ENCODE measurements at regions of chrX and their contacts with region 1.

Region 1: DNA sequence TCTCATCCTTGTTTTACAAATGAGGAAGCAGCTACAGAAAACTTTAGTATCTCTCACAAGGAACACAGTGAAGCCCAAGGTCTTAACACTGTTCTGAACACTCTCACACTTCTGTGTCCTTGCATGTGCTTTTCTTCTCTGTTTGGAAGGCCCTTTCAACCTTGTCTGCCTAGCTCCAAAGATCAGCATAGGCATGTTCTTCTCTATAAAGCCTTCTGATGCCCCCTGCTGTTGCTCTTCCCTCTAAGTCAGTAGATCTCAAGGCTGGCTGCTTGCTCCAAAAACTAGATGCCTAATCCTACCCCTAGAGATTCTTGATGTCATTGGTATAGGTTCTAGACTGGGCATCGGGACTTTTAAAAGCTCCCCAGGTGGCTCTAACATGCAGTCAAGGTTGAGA is 5.9 kb downstream of the APOO start:
- DNase-seq: peak; percentile 48
- ATAC-seq: peak; percentile 82
- H3K4me3 Mint-ChIP-seq: no peak overlapping the region
- H3K27ac Mint-ChIP-seq: no peak overlapping the region
- H3K4me1 Mint-ChIP-seq: peaks cover 7% of the 10 kb centered on the region
- H3K27me3 Mint-ChIP-seq: no peaks in the 10 kb centered on the region

Region 2: GRCh38 chrX:23637187-23637586 is 264.6 kb before region 1 on chrX:
- CTCF ChIA-PET with region 1: interaction called, 11 read pairs
- POLR2A ChIA-PET with region 1: no interaction called
- intact Hi-C with region 1: loop called (anchors 1 kb)
- DNase-seq: peak; percentile 80
- ATAC-seq: peak; percentile 98
- H3K4me3 Mint-ChIP-seq: no peak overlapping the region
- H3K27ac Mint-ChIP-seq: no peak overlapping the region
- H3K4me1 Mint-ChIP-seq: no peaks in the 10 kb centered on the region
- H3K27me3 Mint-ChIP-seq: peaks cover 2% of the 10 kb centered on the region

Region 3: DNA sequence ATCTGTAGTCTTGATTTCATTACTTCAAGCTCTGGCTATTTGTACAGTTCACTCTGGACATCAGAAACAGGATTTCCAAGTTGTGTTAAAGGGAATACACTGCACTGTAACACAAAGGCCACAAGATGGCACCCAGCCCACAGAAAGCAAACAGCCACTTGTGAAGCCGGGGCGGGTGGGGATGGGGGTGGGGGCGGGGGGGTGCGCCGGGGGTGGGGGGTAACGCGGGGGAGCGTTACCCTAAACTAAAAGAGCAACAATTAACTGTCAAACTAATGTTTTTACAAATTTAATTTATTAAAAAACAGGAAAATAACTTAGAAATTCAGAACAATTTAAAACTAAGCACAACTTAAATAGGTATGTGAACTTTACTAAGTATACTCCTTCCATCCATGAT is 207.2 kb before region 1 on chrX:
- CTCF ChIA-PET with region 1: interaction called, 24 read pairs
- POLR2A ChIA-PET with region 1: interaction called, 3 read pairs
- intact Hi-C with region 1: loop called (anchors 1 kb)
- DNase-seq: peak; percentile 60
- ATAC-seq: peak; percentile 55
- H3K4me3 Mint-ChIP-seq: no peak overlapping the region
- H3K27ac Mint-ChIP-seq: no peak overlapping the region
- H3K4me1 Mint-ChIP-seq: no peaks in the 10 kb centered on the region
- H3K27me3 Mint-ChIP-seq: no peaks in the 10 kb centered on the region

Region 4: GRCh38 chrX:23699636-23700194 is 202.1 kb before region 1 on chrX:
- CTCF ChIA-PET with region 1: interaction called, 24 read pairs
- POLR2A ChIA-PET with region 1: interaction called, 3 read pairs
- intact Hi-C with region 1: loop called (anchors 1 kb)
- DNase-seq: peak; percentile 34
- ATAC-seq: peak; percentile 68
- H3K4me3 Mint-ChIP-seq: peak overlapping the region; percentile 40
- H3K27ac Mint-ChIP-seq: no peak overlapping the region
- H3K4me1 Mint-ChIP-seq: peaks cover 2% of the 10 kb centered on the region
- H3K27me3 Mint-ChIP-seq: no peaks in the 10 kb centered on the region

Region 5: GRCh38 chrX:23756157-23756559 is 145.6 kb before region 1 on chrX:
- CTCF ChIA-PET with region 1: interaction called, 8 read pairs
- POLR2A ChIA-PET with region 1: no interaction called
- intact Hi-C with region 1: loop called (anchors 1 to 2 kb)
- DNase-seq: peak; percentile 71
- ATAC-seq: peak; percentile 79
- H3K4me3 Mint-ChIP-seq: no peak overlapping the region
- H3K27ac Mint-ChIP-seq: peak overlapping the region; percentile 37
- H3K4me1 Mint-ChIP-seq: peaks cover 8% of the 10 kb centered on the region
- H3K27me3 Mint-ChIP-seq: no peaks in the 10 kb centered on the region